ENCODE measurements at regions of chr7 and their contacts with region 1.

Region 1: GRCh38 chr7:101625031-101625791 is 3.9 kb downstream of the MYL10 start:
- DNase-seq: no peak
- ATAC-seq: peak; percentile 29
- H3K4me3 Mint-ChIP-seq: no peak overlapping the region
- H3K27ac Mint-ChIP-seq: no peak overlapping the region; the same call in 1 of the 2 replicates
- H3K4me1 Mint-ChIP-seq: peaks cover 21% of the 10 kb centered on the region
- H3K27me3 Mint-ChIP-seq: no peaks in the 10 kb centered on the region
- CTCF ChIP-seq: no peak

Region 2: DNA sequence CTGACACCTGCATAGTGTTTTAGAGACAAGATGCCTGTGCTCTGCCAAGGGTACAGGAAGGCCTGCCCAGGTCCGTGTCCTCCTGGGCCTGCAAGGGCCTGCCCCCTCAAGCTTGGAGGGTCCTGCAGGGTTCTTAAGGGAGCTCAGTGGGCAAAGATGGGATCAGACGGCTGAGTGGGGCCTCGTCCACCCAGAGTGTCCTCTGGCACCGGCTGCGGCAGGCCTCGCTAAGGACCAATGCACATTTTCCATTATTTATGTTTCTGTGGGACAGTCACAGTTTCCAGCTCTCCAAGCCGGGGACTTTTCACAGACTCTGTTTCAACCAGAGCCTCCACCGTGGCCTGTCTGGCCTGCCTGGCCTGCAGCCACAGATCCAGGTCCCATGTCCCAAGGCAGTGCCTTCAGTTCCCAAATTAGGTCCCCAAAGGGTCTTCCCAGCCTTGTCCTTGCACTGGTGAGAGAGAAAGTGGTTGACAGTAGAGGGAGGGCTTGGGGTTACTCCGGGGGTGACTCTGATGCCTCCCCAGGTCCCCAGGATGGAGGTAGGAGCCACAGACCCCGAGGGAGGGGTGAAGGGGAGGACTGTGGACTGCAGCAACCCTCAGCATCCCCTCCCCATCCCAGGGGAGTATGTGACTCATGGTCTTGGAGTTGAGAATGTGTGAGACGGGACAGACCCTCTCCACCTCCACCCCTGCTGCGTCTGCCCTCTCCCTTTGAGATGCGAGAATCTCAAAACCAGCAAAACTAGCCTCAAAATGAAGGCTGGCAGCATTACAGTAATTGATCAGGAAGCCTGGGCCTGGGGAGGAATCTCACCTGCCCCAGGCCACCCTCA is 10.9 kb before region 1 on chr7:
- CTCF ChIA-PET with region 1: interaction called, 11 read pairs
- POLR2A ChIA-PET with region 1: no interaction called
- DNase-seq: no peak
- ATAC-seq: peak; percentile 13; the same call in 1 of the 2 replicates
- H3K4me3 Mint-ChIP-seq: no peak overlapping the region
- H3K27ac Mint-ChIP-seq: no peak overlapping the region
- H3K4me1 Mint-ChIP-seq: peaks cover 35% of the 10 kb centered on the region
- H3K27me3 Mint-ChIP-seq: no peaks in the 10 kb centered on the region
- CTCF ChIP-seq: no peak